ENCODE measurements at regions of chr10 and their contacts with region 1.

Region 1: DNA sequence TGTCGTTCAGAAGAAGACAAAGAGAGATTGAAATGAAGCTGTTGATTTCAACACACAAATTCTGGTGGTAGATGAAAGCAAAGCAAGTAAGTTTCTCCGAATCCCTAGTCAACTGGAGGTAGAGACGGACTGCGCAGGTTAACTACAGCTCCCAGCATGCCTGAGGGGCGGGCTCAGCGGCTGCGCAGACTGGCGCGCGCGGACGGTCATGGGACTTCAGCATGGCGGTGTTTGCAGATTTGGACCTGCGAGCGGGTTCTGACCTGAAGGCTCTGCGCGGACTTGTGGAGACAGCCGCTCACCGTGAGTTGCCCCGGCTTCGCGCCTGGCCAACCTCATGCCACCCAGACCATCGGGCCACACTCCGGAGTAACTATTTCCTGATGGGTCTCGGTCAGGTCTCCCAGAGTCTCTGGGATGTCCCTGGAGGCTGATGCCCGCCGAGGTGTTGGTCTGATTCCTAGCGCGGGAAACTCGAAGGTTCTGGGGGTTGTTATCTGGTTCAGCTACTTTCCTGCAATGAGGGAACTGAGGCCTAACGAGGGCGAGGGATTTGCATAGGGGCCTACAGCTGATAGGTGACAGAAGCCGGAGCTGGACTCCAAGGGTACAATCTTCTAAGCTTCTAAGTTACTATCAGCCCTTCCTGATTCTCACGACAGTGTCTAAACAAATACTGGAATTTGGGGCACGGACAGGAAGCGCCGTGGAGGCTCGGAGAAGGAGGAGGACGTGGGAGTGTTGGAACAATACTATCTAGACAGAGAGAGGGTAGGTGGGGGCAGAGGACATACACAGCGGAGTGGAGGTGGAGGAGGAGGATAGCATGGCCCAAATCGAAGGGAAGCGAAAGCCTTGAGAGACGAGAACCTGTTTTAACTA is at the start of gene RPP30:
- DNase-seq: peak; percentile 34
- H3K4me3 ChIP-seq: peak within 1 kb of the TSS; percentile 97
- H3K27ac ChIP-seq: peak within 1 kb of the TSS; percentile 12
- H3K27me3 ChIP-seq: peaks cover 8% of the 10 kb centered on the region
- CTCF ChIP-seq: no peak
- polyA plus RNA-seq, gene RPP30: 41.8 and 43.7 TPM in 2 replicates

Region 2: DNA sequence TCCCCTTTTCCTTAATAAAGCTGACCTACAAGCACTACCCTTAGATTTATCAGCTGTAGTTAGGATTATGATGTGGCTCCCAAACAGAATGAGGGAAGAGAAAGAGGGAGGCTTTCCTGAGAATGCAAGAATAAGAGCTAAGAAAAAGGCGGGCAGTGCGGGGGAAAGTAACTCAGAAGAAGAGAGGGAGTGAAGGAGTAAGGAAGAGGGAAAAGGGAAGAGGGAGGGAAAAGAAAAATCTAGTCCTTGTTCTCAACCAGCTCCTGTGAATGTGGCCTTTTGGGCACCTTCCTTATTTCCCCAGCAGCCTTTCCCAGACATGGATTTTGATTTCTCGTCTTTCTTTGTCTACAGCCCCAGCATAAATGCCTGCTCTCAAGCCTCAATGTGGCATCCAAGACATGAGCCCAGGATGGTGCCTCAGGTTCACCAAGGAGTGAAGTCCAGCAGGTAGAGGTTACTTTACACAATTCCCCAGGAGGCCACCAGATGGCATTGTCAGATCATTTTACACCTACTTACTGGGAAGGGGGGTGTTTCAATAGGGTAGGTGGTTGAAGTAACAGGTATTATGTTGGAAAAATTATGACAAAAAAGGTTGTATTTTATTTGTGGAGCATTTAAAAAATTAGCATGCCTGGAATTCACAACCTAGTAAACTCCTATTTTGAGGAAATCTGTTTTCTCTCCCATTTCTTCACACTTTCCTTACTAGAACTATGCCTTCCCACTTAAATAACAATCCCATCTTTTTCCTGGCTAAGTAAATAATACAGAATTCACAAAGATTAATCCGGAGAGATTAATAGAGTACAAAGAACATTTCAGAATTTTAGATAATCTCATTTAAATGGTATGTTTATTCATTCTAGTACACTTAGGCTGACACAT is 120.7 kb before region 1 on chr10:
- CTCF ChIA-PET with region 1: interaction called, 249 read pairs
- POLR2A ChIA-PET with region 1: no interaction called
- DNase-seq: no peak
- H3K4me3 ChIP-seq: no peak overlapping the region
- H3K27ac ChIP-seq: no peak overlapping the region
- H3K27me3 ChIP-seq: no peaks in the 10 kb centered on the region
- CTCF ChIP-seq: peak; percentile 79

Region 3: GRCh38 chr10:90798482-90798881 is 73.5 kb before region 1 on chr10:
- CTCF ChIA-PET with region 1: no interaction called
- POLR2A ChIA-PET with region 1: no interaction called
- DNase-seq: no peak
- H3K4me3 ChIP-seq: no peak overlapping the region
- H3K27ac ChIP-seq: no peak overlapping the region
- H3K27me3 ChIP-seq: no peaks in the 10 kb centered on the region
- CTCF ChIP-seq: no peak

Region 4: GRCh38 chr10:90857635-90858460 is 14.2 kb before region 1 on chr10 and contains the start of gene HTR7:
- CTCF ChIA-PET with region 1: interaction called, 32 read pairs
- POLR2A ChIA-PET with region 1: no interaction called
- DNase-seq: no peak
- H3K4me3 ChIP-seq: peak within 1 kb of the TSS; percentile 63
- H3K27ac ChIP-seq: peak within 1 kb of the TSS; percentile 65
- H3K27me3 ChIP-seq: peaks cover 5% of the 10 kb centered on the region
- CTCF ChIP-seq: peak; percentile 49
- polyA plus RNA-seq, gene HTR7: 1.1 TPM in 2 replicates

Region 5: DNA sequence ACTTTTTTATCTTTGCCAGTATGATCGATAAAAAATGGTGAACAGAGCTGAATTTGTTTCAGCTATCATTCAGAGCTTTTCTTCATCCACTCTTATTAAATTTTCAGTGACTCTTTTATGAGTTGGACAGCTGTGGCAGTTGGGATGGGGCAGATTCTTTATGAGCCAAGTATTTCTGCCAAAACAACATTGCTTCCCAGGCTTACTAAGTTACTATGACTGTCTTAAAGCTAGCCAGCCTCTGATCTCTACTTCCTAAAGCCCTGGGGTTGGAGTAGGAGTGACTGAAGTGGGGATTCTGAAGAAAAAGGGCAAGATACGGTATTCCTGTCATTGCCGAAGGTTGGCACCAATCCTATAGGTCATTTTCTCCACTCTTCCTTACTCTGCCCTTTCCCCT is 12.4 kb after region 1 on chr10:
- CTCF ChIA-PET with region 1: interaction called, 10 read pairs
- POLR2A ChIA-PET with region 1: no interaction called
- DNase-seq: no peak
- H3K4me3 ChIP-seq: no peak overlapping the region
- H3K27ac ChIP-seq: peak overlapping the region; percentile 49
- H3K27me3 ChIP-seq: no peaks in the 10 kb centered on the region
- CTCF ChIP-seq: no peak